GM12878 (cell line): ENCODE measurements at regions of chr17 and their contacts with region 1.

Region 1: DNA sequence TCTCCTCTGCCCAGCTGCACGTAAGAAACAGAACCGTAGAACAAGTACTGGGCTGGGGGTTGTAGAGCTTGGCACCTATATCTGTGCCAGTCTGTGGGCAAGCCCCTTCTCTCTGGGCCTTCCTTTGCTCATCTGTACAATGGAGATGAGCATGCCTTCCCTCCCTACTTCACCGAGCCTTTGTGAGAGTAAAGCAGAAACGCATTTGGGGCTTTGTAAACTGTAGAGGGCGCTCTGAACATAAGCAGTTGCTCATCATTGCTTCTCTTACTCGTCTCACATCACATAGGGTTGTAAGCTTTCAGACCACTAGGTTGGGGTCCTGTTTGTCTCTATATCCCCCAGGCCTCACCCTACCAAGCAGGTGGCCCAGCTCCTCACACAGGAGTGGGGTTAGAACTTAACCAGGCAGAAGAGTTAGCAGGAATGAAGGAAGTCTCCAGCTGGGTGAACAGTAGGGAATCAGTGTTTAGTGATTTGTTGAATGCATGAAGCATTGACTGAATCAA is 15.1 kb downstream of the SAMD14 start:
- DNase-seq: no peak
- ATAC-seq: peak; percentile 74
- H3K4me3 ChIP-seq: no peak overlapping the region
- H3K27ac ChIP-seq: no peak overlapping the region
- H3K4me1 ChIP-seq: no peaks in the 10 kb centered on the region
- H3K27me3 ChIP-seq: peaks cover 6% of the 10 kb centered on the region in 2 experiments; a peak in 3 of 4 replicates
- CTCF ChIP-seq: peak; percentile 69 to 77 (median 72)
- EP300 ChIP-seq: no peak
- POLR2A ChIP-seq: no peak
- RAD21 ChIP-seq: peak; percentile 64

Region 2: DNA sequence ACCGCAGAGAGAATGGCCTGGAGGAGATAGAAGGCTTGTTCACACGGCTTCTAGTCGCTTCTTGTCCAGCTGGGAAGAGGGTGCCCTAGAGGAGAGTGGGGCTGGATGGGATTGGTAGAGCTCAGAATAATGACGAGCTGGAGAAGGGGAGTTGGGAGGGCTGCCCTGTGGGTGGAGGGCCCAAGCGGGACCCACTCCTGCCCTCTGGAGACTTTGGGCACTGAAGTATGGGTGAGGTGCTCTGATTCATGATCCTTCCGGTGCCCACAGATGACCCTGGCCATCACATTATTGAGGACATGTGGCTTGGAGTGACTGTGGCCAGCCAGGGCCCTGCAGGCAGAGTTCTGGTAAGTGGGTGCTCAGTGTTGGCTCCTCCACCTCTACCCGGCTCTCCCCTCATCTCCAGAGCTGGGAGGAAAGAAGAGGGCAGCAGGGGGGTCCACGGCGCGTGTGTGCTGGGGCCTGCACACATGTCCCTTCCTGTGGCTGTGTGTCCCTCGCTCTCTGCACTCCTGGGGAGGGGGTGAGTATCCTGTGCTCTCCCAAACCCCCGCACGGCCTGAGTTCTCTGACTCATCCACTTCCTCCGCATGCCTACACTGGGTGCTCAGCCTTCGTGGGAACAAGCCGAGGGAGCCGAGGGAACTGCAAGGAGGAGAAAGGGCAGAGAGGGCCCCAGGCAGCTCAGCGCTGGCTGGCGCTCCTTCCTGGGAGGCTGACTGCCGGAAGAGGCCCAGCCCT is 50.5 kb before region 1 on chr17:
- CTCF ChIA-PET with region 1: no interaction called
- POLR2A ChIA-PET with region 1: no interaction called
- RAD21 ChIA-PET with region 1: no interaction called
- SMC1A ChIA-PET with region 1: no interaction called
- in situ Hi-C with region 1: no loop called
- intact Hi-C with region 1: no loop called
- DNase-seq: no peak
- ATAC-seq: no peak
- H3K4me3 ChIP-seq: no peak overlapping the region
- H3K27ac ChIP-seq: no peak overlapping the region
- H3K4me1 ChIP-seq: peaks cover 5% of the 10 kb centered on the region; the same call in 1 of the 2 replicates
- H3K27me3 ChIP-seq: no peaks in the 10 kb centered on the region
- CTCF ChIP-seq: no peak
- EP300 ChIP-seq: no peak
- POLR2A ChIP-seq: no peak
- RAD21 ChIP-seq: no peak

Region 3: DNA sequence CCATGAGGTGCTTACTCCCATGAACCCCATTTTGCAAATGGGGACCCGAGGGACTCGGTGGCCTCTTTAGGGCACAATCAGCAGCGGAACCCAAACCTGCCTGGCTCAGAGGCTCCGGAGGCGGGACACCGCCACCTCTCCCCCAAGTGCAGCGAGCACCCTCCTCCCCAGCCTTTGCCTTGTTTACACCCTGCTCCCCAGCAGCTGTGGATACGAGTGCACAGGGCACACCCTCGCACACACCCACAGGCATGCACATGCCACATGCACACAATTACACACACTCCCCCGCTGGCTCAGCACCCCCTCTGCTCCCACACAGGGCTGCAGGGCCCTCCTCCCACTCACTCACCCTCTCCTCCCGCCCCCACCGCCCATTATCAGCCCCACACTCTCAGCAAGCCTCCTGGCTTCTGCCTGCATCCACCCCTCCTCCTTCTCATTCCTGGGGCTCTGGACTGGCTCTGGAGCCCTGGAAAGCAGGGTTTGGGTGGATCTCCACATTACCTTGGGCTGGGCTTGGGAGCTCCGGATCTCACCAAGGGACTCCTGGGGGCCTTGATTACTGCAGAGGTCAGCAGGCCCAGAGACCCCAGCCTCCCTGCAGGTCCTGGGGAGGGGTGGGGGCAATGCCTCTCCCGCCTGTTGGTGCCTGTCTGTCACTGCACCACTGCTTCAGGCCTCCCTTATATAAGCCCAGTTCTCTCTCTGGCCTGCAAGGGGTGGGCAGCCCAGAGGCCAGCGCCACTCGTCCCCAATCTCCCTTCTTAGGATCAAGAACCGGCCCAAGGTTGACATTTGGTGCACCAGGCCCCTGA is 13.3 kb before region 1 on chr17:
- CTCF ChIA-PET with region 1: interaction called, 10 read pairs
- POLR2A ChIA-PET with region 1: no interaction called
- RAD21 ChIA-PET with region 1: no interaction called
- SMC1A ChIA-PET with region 1: no interaction called
- in situ Hi-C with region 1: no loop called
- intact Hi-C with region 1: no loop called
- DNase-seq: no peak
- ATAC-seq: no peak
- H3K4me3 ChIP-seq: no peak overlapping the region
- H3K27ac ChIP-seq: no peak overlapping the region
- H3K4me1 ChIP-seq: peaks cover 3% of the 10 kb centered on the region; the same call in 1 of the 2 replicates
- H3K27me3 ChIP-seq: no peaks in the 10 kb centered on the region
- CTCF ChIP-seq: no peak
- EP300 ChIP-seq: no peak
- POLR2A ChIP-seq: no peak
- RAD21 ChIP-seq: no peak

Region 4: GRCh38 chr17:50151041-50151936 is 36.4 kb after region 1 on chr17:
- CTCF ChIA-PET with region 1: interaction called, 10 read pairs
- POLR2A ChIA-PET with region 1: interaction called, 4 read pairs
- RAD21 ChIA-PET with region 1: interaction called, 4 read pairs
- SMC1A ChIA-PET with region 1: interaction called, 3 read pairs
- in situ Hi-C with region 1: no loop called
- intact Hi-C with region 1: no loop called
- DNase-seq: peak; percentile 63
- ATAC-seq: peak; percentile 67
- H3K4me3 ChIP-seq: peak overlapping the region; percentile 95
- H3K27ac ChIP-seq: peak overlapping the region; percentile 89
- H3K4me1 ChIP-seq: peaks cover 46% of the 10 kb centered on the region
- H3K27me3 ChIP-seq: no peaks in the 10 kb centered on the region
- CTCF ChIP-seq: peak; percentile 49 to 84 (median 66)
- EP300 ChIP-seq: no peak; a peak in 1 of 4 replicates
- POLR2A ChIP-seq: peak; percentile 70
- RAD21 ChIP-seq: no peak

Region 5: GRCh38 chr17:50161023-50161910 is 46.4 kb after region 1 on chr17:
- CTCF ChIA-PET with region 1: interaction called, 38 read pairs
- POLR2A ChIA-PET with region 1: interaction called, 3 read pairs
- RAD21 ChIA-PET with region 1: interaction called, 19 read pairs
- SMC1A ChIA-PET with region 1: interaction called, 10 read pairs
- in situ Hi-C with region 1: no loop called
- intact Hi-C with region 1: no loop called
- DNase-seq: peak; percentile 80
- ATAC-seq: peak; percentile 96
- H3K4me3 ChIP-seq: peak overlapping the region; percentile 53
- H3K27ac ChIP-seq: peak overlapping the region; percentile 32; the same call in 1 of the 2 replicates
- H3K4me1 ChIP-seq: peaks cover 26% of the 10 kb centered on the region
- H3K27me3 ChIP-seq: no peaks in the 10 kb centered on the region
- CTCF ChIP-seq: peak; percentile 93 to 98 (median 97)
- EP300 ChIP-seq: no peak
- POLR2A ChIP-seq: peak; percentile 83
- RAD21 ChIP-seq: peak; percentile 71